Endothelial cell of umbilical vein (primary cell): ENCODE measurements at regions of chr7 and their contacts with region 1.

Region 1: GRCh38 chr7:130896898-130897514 is 163.0 kb upstream of the KLF14 start:
- DNase-seq: peak; percentile 75
- H3K4me3 ChIP-seq: no peak overlapping the region
- H3K27ac ChIP-seq: peak overlapping the region; percentile 42
- H3K4me1 ChIP-seq: peaks cover 75% of the 10 kb centered on the region
- H3K27me3 ChIP-seq: no peaks in the 10 kb centered on the region
- CTCF ChIP-seq: peak; percentile 69 to 84
- POLR2A ChIP-seq: peak; percentile 39

Region 2: GRCh38 chr7:130921391-130922180 is 24.6 kb after region 1 on chr7:
- CTCF ChIA-PET with region 1: interaction called, 28 read pairs
- POLR2A ChIA-PET with region 1: no interaction called
- dilution Hi-C with region 1: no loop called
- intact Hi-C with region 1: no loop called
- DNase-seq: peak; percentile 91
- H3K4me3 ChIP-seq: peak overlapping the region in 2 of 3 experiments; percentile 9 to 25
- H3K27ac ChIP-seq: peak overlapping the region; percentile 90
- H3K4me1 ChIP-seq: peaks cover 49% of the 10 kb centered on the region
- H3K27me3 ChIP-seq: no peaks in the 10 kb centered on the region
- CTCF ChIP-seq: peak in 1 of 2 donors; percentile 4
- POLR2A ChIP-seq: peak; percentile 50

Region 3: DNA sequence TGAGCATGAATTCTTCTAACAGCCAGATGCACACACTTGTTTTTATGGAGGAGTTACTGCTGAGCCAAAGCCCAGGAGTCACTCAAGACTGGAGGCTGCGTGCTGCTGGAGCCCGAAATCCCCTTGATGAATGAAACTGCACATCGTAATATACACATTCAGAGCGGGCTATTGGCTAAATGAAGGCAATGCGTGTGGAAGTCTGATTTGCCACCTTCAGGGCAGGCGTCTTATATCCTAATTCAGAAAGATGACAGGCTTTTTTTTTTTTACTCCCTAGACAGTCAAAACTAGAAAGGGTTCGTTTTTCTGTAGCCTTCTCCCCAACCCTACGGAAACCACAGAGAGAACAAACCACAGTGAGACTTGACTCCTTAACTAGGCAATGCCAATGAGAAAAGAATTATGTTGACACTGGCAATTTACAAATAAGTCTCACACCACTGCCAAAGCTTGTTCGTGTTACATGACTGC is 64.2 kb after region 1 on chr7:
- CTCF ChIA-PET with region 1: interaction called, 21 read pairs
- POLR2A ChIA-PET with region 1: no interaction called
- dilution Hi-C with region 1: no loop called
- intact Hi-C with region 1: no loop called
- DNase-seq: no peak
- H3K4me3 ChIP-seq: no peak overlapping the region
- H3K27ac ChIP-seq: peak overlapping the region; percentile 42
- H3K4me1 ChIP-seq: peaks cover 21% of the 10 kb centered on the region
- H3K27me3 ChIP-seq: no peaks in the 10 kb centered on the region
- CTCF ChIP-seq: no peak
- POLR2A ChIP-seq: no peak

Region 4: DNA sequence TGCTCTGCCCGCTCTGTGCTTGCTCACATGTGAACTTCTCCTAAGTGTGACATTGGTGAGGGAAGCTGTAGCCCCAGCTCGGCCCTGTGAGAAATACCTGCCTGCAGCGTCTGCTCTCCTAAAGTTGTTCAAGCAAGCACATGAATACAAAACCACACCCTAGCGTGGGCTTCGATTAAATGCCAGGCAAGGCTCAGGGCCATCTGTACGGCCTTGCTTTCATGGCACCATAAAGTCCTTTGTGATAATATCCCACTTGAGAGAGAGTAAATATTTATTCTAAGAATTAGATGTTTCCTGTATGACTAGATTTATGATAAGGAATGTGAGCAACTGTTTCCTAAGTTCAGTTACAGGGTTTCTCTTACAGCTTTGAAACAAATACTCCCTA is 99.8 kb after region 1 on chr7:
- CTCF ChIA-PET with region 1: interaction called, 19 read pairs
- POLR2A ChIA-PET with region 1: no interaction called
- dilution Hi-C with region 1: no loop called
- intact Hi-C with region 1: no loop called
- DNase-seq: peak; percentile 78
- H3K4me3 ChIP-seq: no peak overlapping the region
- H3K27ac ChIP-seq: no peak overlapping the region
- H3K4me1 ChIP-seq: peaks cover 14% of the 10 kb centered on the region
- H3K27me3 ChIP-seq: peaks cover 14 to 26% of the 10 kb centered on the region in 2 experiments
- CTCF ChIP-seq: no peak
- POLR2A ChIP-seq: no peak

Region 5: GRCh38 chr7:131034166-131034881 is 137.3 kb after region 1 on chr7:
- CTCF ChIA-PET with region 1: interaction called, 175 read pairs
- POLR2A ChIA-PET with region 1: no interaction called
- dilution Hi-C with region 1: no loop called
- intact Hi-C with region 1: no loop called
- DNase-seq: no peak
- H3K4me3 ChIP-seq: no peak overlapping the region
- H3K27ac ChIP-seq: no peak overlapping the region
- H3K4me1 ChIP-seq: peaks cover under 1% of the 10 kb centered on the region
- H3K27me3 ChIP-seq: no peaks in the 10 kb centered on the region
- CTCF ChIP-seq: no peak
- POLR2A ChIP-seq: no peak

Region 6: DNA sequence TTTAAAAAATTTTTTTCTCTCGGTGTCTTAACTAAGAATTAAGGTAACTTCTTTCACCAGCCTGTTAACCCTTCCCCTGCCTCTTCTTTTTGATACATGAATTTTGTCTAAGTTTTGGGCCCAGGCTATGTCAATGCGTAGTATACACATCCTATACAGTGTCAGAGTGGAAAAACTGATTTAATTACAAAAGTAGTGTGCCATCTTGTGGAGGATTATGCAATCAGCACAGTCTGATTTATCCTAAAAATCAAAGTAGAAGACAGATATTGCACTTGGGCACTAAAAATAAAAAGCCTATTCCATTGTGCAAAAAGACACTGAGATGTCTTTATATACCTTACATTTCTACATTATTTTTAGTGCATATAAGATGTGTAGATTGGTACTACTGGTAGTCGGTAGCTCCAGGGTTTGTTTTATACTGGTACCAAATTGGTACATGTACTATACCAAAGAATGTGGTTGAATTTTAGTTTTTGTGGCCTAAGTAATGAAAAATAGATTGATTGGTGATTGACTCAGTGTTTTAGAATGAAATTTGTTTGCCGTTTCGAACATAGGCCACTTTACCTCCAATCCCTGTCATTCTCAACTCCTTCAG is 527.3 kb after region 1 on chr7:
- CTCF ChIA-PET with region 1: interaction called, 10 read pairs
- POLR2A ChIA-PET with region 1: no interaction called
- dilution Hi-C with region 1: no loop called
- intact Hi-C with region 1: no loop called
- DNase-seq: peak; percentile 66
- H3K4me3 ChIP-seq: no peak overlapping the region
- H3K27ac ChIP-seq: no peak overlapping the region
- H3K4me1 ChIP-seq: no peaks in the 10 kb centered on the region
- H3K27me3 ChIP-seq: no peaks in the 10 kb centered on the region
- CTCF ChIP-seq: peak; percentile 39 to 43
- POLR2A ChIP-seq: no peak